ENCODE measurements at regions of chrX and their contacts with region 1.

Region 1: DNA sequence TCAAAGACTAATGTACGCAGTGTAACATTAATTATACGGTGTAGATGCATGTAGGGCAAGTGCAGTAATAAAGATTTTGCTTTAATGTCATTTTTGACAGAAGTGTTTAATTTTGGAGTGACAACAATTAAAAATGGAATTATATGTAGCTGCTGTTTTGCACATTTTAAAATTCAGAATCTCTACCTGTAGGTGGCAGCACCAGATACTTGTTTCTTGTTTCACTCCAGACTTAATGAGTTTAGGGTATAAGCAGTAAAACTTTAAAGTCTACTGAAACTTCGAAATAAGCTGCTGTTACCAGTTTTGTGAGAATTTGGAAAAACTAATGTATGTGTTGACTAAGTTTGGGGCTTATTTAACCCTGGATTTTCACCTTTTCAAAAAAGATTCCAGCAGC is 144.9 kb downstream of the POLA1 start:
- DNase-seq: peak in 3 of 5 donors; percentile 1 to 35 (median 5)
- H3K4me3 ChIP-seq: no peak overlapping the region
- H3K4me3 Mint-ChIP-seq: no peak overlapping the region
- H3K27ac ChIP-seq: no peak overlapping the region
- H3K27ac Mint-ChIP-seq: peak overlapping the region in 1 of 8 donors; percentile 43
- H3K4me1 ChIP-seq: no peaks in the 10 kb centered on the region
- H3K4me1 Mint-ChIP-seq: no peaks in the 10 kb centered on the region
- H3K27me3 ChIP-seq: no peaks in the 10 kb centered on the region
- H3K27me3 Mint-ChIP-seq: peaks cover 0 to 3% of the 10 kb centered on the region in 2 donors

Region 2: DNA sequence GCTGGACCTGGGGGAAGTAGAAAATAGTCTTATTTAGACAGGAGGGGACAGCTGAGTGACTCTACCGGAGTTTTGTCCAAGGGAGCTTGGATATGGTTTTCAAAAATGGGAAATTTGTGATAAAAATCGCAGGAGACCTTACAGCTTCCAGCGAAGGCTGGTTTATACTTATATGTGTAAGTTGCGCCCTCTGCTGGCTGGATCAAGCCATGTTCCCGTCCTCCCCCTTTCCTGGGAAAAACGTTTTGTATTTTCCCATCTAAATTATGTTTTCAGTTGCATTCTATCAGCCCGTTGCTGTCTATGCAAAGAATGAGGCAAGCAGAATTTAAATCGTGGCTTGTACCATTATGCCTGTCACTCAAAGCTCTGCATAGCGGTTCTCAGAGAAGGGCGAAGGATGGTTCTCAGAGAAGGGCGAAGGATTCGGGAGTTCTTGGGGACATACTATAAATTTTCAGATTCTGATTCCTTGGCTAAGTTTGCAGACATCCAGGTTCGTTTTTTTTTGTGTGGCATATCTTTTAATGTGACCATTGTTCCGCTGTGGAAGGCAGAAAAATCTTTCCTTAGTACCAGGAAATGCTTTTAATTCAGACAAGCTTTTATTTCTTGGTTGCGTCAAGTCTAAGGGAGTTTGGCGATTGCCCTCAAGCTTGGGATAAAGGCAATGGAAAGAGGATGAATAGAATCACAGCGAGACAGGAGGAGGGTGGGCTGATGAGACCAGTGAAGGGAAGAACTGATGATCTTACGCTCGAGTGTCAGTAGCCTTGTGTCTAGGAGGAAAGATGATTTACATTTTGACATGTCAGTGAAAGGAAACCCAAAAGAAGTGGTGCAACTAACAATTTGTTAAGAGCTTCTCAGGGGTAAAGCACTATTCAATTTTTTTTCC is 305.7 kb after region 1 on chrX:
- CTCF ChIA-PET with region 1: interaction called, 32 read pairs
- POLR2A ChIA-PET with region 1: no interaction called
- DNase-seq: peak in 4 of 5 donors; percentile 3 to 49 (median 11)
- H3K4me3 ChIP-seq: no peak overlapping the region
- H3K4me3 Mint-ChIP-seq: no peak overlapping the region
- H3K27ac ChIP-seq: no peak overlapping the region
- H3K27ac Mint-ChIP-seq: no peak overlapping the region
- H3K4me1 ChIP-seq: no peaks in the 10 kb centered on the region
- H3K4me1 Mint-ChIP-seq: peaks cover 0 to 7% (median 0%) of the 10 kb centered on the region in 3 donors
- H3K27me3 ChIP-seq: no peaks in the 10 kb centered on the region
- H3K27me3 Mint-ChIP-seq: peaks cover 11 to 16% of the 10 kb centered on the region in 2 donors

Measured in CD8-positive, alpha-beta memory T cell (primary cell).